ENCODE measurements at regions of chr1 and their contacts with region 1.

Region 1: DNA sequence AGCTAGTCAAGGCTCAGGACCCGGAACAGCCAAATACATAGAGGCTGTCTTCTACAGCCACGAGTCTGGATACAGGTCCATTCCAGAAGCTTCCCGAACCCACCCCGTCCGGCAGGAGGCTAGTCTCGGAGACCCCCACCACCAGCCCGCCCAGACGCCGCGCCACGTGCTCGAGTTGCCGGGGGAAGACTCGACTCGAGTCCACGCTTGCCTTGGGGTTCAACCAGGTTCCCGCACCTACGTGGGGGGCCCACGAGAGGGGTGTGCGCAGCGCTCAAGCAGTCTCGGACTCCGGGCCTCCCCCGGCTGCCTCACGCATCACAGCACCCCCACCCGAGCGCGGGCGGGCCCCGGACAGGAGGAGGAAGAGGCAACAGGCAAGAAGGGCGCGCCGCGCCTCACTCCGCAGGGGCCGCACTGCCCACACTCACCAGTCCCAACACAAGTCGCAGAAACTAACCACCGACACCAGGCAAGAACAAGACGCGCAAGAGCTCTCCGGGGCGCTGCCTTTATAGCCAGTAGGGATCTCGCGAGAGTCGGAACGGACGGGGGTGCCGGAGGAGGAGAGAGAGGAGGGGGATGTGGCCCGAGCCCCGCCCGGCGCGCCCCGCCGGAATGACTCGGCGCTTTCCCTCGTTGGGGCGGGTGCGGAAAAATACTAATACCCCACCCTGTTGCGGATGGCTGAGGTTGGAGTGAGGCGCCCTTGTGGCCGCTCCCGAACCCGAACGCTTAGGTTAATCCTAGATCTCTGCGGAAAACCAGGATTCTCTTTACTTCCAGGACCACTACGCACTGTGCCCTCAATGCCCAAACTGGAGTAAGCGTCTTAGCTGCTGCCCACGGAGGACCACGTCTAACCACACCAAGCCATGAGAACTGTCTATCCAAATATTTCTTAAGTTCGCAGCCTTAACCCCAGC is at the start of gene PRDX1:
- DNase-seq: peak; percentile 91 to 99 (median 93)
- ATAC-seq: peak; percentile 95
- H3K4me3 ChIP-seq: peak within 1 kb of the TSS; percentile 94
- H3K4me3 Mint-ChIP-seq: peak within 1 kb of the TSS; percentile 90 to 99 (median 94)
- H3K27ac ChIP-seq: peak within 1 kb of the TSS; percentile 87
- H3K27ac Mint-ChIP-seq: peak within 1 kb of the TSS; percentile 83 to 96 (median 91)
- H3K4me1 ChIP-seq: peaks cover 7 to 8% of the 10 kb centered on the region in 2 donors
- H3K4me1 Mint-ChIP-seq: peaks cover 14 to 56% (median 32%) of the 10 kb centered on the region in 7 donors
- H3K27me3 ChIP-seq: no peaks in the 10 kb centered on the region
- H3K27me3 Mint-ChIP-seq: peaks cover 0 to 12% (median 0%) of the 10 kb centered on the region in 5 donors
- total RNA-seq, gene PRDX1: 28.8 to 369 (median 96.3) TPM

Region 2: DNA sequence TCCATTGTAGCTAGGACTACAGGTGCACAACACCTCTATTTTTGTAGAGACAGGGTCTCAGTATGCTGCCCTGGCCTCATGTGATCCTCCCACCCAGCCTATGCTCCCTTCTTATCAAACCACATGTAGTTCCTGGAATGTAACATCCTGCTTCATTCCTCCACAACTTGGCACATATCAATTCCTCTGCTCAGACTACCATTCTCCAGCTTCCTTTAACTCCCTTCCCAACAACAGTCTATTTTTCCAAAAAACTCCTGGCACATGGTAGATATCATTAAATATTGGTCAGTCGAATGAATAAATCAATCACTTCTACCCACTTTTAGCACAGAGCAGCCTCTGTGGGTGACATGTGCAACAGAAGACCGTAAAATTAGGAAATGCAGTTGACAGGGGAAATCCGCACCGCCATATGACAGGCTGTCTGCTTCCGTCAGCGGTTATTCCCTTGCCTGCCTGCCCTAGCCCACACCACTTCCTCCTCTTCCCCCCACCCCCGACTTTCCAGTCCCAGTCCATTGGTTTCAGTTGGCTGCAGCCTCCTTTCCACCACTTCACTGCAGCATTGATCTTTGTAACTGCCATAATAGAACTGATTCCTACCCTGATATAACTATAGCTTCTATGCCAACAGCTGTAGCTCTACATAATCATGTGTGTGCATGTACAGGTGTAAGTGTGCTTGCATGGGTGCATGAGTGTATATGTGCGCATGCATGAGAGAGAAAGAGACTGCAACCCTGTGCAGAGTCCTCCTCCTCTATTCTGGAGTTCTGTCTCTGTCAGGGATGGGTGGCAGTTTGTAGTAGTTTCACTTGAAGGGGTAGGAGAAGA is 22.1 kb after region 1 on chr1:
- CTCF ChIA-PET with region 1: interaction called, 4 read pairs
- POLR2A ChIA-PET with region 1: interaction called, 26 read pairs
- intact Hi-C with region 1: loop called in 1 of 2 experiments (anchors 1 kb)
- DNase-seq: peak; percentile 31 to 87 (median 63)
- ATAC-seq: peak; percentile 98
- H3K4me3 ChIP-seq: peak overlapping the region; percentile 15
- H3K4me3 Mint-ChIP-seq: peak overlapping the region; percentile 33 to 82 (median 76)
- H3K27ac ChIP-seq: peak overlapping the region; percentile 55
- H3K27ac Mint-ChIP-seq: peak overlapping the region; percentile 35 to 93 (median 81)
- H3K4me1 ChIP-seq: peaks cover 12 to 13% of the 10 kb centered on the region in 2 donors
- H3K4me1 Mint-ChIP-seq: peaks cover 13 to 41% (median 32%) of the 10 kb centered on the region in 7 donors
- H3K27me3 ChIP-seq: no peaks in the 10 kb centered on the region
- H3K27me3 Mint-ChIP-seq: no peaks in the 10 kb centered on the region

Region 3: GRCh38 chr1:45550401-45551351 is 29.0 kb after region 1 on chr1 and contains the start of gene AKR1A1:
- CTCF ChIA-PET with region 1: interaction called, 3 read pairs
- POLR2A ChIA-PET with region 1: interaction called, 59 read pairs
- intact Hi-C with region 1: loop called (anchors 1 kb)
- DNase-seq: peak; percentile 79 to 91 (median 88)
- ATAC-seq: peak; percentile 98
- H3K4me3 ChIP-seq: peak within 1 kb of the TSS; percentile 93
- H3K4me3 Mint-ChIP-seq: peak within 1 kb of the TSS; percentile 89 to 99 (median 96)
- H3K27ac ChIP-seq: peak within 1 kb of the TSS; percentile 89
- H3K27ac Mint-ChIP-seq: peak within 1 kb of the TSS; percentile 83 to 98 (median 96)
- H3K4me1 ChIP-seq: peaks cover 12 to 22% of the 10 kb centered on the region in 2 donors
- H3K4me1 Mint-ChIP-seq: peaks cover 18 to 28% (median 22%) of the 10 kb centered on the region in 7 donors
- H3K27me3 ChIP-seq: no peaks in the 10 kb centered on the region
- H3K27me3 Mint-ChIP-seq: no peaks in the 10 kb centered on the region
- total RNA-seq, gene AKR1A1: 47.5 to 155 (median 69.3) TPM

Measured in naive thymus-derived CD4-positive, alpha-beta T cell (primary cell).